A673 (cell line): ENCODE measurements at regions of chr16 and their contacts with region 1.

Region 1: DNA sequence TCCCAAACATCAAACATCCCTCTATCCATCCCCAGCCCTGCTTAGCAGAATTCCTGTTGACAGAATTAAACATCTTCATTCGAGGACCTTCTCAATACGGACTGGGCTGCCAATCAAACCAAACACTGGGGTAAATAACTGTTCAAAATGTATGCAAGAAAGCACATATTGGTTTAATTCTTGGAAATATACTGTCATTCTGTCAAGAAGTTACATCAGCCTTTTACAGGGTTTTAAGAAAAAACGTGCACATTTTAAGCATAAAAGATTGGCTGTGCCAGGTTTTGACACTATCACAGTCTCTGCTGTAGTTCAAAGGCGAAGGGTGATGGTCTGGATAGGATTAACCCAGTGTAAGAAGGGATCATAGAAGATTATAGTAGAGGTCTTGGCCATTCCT is 25.1 kb upstream of the CCNF start:
- DNase-seq: no peak
- H3K4me3 ChIP-seq: no peak overlapping the region
- H3K27ac ChIP-seq: no peak overlapping the region
- H3K4me1 ChIP-seq: no peaks in the 10 kb centered on the region
- H3K27me3 ChIP-seq: no peaks in the 10 kb centered on the region
- CTCF ChIP-seq: no peak

Region 2: GRCh38 chr16:2386990-2387389 is 17.1 kb before region 1 on chr16:
- CTCF ChIA-PET with region 1: interaction called, 10 read pairs
- POLR2A ChIA-PET with region 1: no interaction called
- intact Hi-C with region 1: no loop called
- DNase-seq: no peak
- H3K4me3 ChIP-seq: no peak overlapping the region
- H3K27ac ChIP-seq: no peak overlapping the region
- H3K4me1 ChIP-seq: no peaks in the 10 kb centered on the region
- H3K27me3 ChIP-seq: no peaks in the 10 kb centered on the region
- CTCF ChIP-seq: no peak

Region 3: GRCh38 chr16:2854700-2855309 is 450.7 kb after region 1 on chr16:
- CTCF ChIA-PET with region 1: no interaction called
- POLR2A ChIA-PET with region 1: no interaction called
- intact Hi-C with region 1: no loop called
- DNase-seq: no peak
- H3K4me3 ChIP-seq: no peak overlapping the region
- H3K27ac ChIP-seq: no peak overlapping the region
- H3K4me1 ChIP-seq: no peaks in the 10 kb centered on the region
- H3K27me3 ChIP-seq: peaks cover 18% of the 10 kb centered on the region
- CTCF ChIP-seq: peak; percentile 65

Region 4: DNA sequence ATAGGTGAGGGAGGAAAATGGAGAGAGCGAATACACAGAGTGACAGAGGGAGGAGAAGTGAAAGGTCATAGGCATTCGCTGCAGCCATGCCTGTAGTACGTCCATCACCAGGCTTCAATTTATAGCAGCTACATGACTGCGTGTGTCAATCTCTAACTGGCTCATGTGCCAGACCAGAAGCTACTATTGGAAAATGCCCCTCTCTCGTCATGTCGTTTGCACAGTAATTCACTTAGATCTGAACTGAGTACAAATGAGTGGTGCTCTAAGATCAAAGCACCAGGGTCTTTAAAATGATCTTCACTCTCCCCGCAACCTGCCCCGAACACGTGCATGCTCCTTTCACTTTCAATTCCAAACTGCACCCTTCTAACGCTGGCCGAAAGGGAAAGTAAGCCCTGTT is 1660.9 kb after region 1 on chr16:
- CTCF ChIA-PET with region 1: no interaction called
- POLR2A ChIA-PET with region 1: no interaction called
- intact Hi-C with region 1: no loop called
- DNase-seq: no peak
- H3K4me3 ChIP-seq: no peak overlapping the region
- H3K27ac ChIP-seq: no peak overlapping the region
- H3K4me1 ChIP-seq: no peaks in the 10 kb centered on the region
- H3K27me3 ChIP-seq: no peaks in the 10 kb centered on the region
- CTCF ChIP-seq: no peak